CD8-positive, alpha-beta memory T cell (primary cell): ENCODE measurements at regions of chr5 and their contacts with region 1.

Region 1: GRCh38 chr5:170338933-170339779 is 41.6 kb upstream of the LCP2 start:
- DNase-seq: peak; percentile 43 to 81 (median 66)
- H3K4me3 ChIP-seq: no peak overlapping the region
- H3K4me3 Mint-ChIP-seq: peak overlapping the region in 2 of 7 donors; percentile 29 to 48
- H3K27ac ChIP-seq: no peak overlapping the region
- H3K27ac Mint-ChIP-seq: peak overlapping the region; percentile 60 to 94 (median 62)
- H3K4me1 ChIP-seq: peaks cover 47% of the 10 kb centered on the region
- H3K4me1 Mint-ChIP-seq: peaks cover 36 to 40% (median 40%) of the 10 kb centered on the region in 3 donors
- H3K27me3 ChIP-seq: no peaks in the 10 kb centered on the region
- H3K27me3 Mint-ChIP-seq: peaks cover 0 to 5% of the 10 kb centered on the region in 2 donors

Region 2: GRCh38 chr5:170235876-170236864 is 103.0 kb before region 1 on chr5:
- CTCF ChIA-PET with region 1: interaction called, 17 read pairs
- POLR2A ChIA-PET with region 1: no interaction called
- DNase-seq: no peak
- H3K4me3 ChIP-seq: no peak overlapping the region
- H3K4me3 Mint-ChIP-seq: no peak overlapping the region
- H3K27ac ChIP-seq: no peak overlapping the region
- H3K27ac Mint-ChIP-seq: peak overlapping the region in 7 of 8 donors; percentile 2 to 75 (median 44)
- H3K4me1 ChIP-seq: no peaks in the 10 kb centered on the region
- H3K4me1 Mint-ChIP-seq: peaks cover 0 to 9% (median 0%) of the 10 kb centered on the region in 3 donors
- H3K27me3 ChIP-seq: no peaks in the 10 kb centered on the region
- H3K27me3 Mint-ChIP-seq: no peaks in the 10 kb centered on the region

Region 3: DNA sequence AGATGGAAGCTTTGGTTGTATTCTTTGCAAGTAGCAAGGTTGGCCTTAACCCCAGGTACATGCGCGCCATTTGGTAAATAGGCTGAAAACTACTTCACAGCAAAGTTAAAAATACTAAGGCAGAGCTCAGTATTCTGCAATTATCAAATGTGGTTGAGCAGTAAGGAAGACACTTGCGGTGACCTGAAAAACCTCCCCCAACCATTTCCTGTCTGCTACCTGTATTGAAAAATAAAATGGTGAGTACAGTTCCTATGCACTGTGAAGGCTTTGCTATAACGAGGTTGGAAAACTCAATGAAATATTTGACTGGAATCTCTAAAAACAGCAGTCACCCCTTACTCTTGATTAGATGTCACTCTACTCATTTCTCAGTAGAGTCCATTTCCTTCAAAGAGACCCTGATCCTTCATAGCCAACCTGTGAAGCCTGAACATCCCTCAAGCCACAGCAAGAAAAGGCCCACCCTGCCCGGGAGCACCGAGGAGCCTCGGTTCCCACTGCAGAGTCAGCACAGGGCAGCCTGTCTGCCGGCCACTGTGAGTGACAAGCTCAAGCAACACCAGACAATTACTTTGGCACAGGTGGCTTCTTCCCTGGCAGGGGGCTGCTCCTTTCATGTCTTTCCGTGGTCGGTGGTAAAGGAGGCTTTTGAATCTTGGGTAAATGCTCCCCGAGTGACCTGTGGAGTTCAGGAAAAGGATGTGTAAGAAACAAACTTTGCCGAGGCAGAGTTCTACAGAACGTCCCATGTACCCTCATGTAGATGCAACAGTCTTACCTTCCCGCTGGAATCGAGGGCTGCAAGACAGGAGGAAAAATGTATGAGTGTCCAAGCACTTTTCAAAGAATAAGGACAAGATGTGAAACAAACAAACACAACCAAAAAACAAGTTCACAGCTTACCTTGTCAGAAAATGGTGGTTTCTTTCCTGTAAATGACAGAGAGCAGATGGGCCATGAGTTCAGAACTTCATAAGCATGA is 76.8 kb before region 1 on chr5:
- CTCF ChIA-PET with region 1: interaction called, 114 read pairs
- POLR2A ChIA-PET with region 1: interaction called, 15 read pairs
- DNase-seq: peak in 4 of 5 donors; percentile 40 to 88 (median 78)
- H3K4me3 ChIP-seq: no peak overlapping the region
- H3K4me3 Mint-ChIP-seq: peak overlapping the region; percentile 54 to 80 (median 76)
- H3K27ac ChIP-seq: no peak overlapping the region
- H3K27ac Mint-ChIP-seq: peak overlapping the region; percentile 91 to 98 (median 96)
- H3K4me1 ChIP-seq: peaks cover 76% of the 10 kb centered on the region
- H3K4me1 Mint-ChIP-seq: peaks cover 80 to 91% (median 91%) of the 10 kb centered on the region in 3 donors
- H3K27me3 ChIP-seq: no peaks in the 10 kb centered on the region
- H3K27me3 Mint-ChIP-seq: peaks cover 0 to 2% of the 10 kb centered on the region in 2 donors

Region 4: DNA sequence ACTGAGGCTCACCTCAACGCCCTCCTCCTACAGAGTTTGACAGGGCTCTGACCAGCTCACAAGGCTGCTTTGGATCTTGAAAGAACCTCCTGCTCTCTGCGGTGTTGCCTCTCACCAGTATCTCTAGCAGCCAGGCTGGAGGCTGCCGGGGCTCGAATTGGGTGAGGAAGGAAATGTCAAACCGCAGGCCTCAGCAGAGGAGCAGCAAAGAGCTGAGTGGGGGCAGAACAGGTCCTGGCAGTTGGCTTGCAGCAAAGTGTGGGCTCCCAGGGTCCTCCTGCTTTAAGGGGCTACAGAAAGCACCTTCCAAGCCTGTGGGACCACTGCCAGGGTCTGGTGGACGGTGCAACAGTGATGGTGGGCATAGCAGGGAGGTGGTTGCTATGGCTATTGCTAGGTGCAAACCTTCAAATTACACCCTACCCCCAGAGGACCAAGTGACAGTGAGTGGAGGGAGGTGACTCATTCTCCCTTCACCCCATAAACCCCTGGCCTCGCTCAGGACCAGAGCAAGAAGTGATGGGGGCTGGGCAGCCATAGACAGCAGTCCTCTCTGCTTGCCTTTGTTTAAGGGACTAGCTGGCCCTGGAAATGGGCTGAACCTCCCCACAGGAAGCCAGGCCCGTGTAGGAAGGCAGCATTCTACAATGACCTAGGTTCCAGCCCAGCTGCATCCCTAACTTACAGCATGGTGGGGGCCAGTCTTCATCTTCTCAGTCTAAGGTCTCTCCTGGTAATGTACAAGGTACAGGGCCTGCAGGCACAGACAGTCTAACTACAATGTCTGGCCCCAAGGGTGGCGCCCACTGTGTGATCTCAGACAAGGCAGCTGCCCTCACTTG is 60.3 kb before region 1 on chr5:
- CTCF ChIA-PET with region 1: interaction called, 132 read pairs
- POLR2A ChIA-PET with region 1: interaction called, 27 read pairs
- DNase-seq: peak; percentile 74 to 96 (median 93)
- H3K4me3 ChIP-seq: peak overlapping the region; percentile 55
- H3K4me3 Mint-ChIP-seq: peak overlapping the region; percentile 63 to 89 (median 85)
- H3K27ac ChIP-seq: peak overlapping the region; percentile 65
- H3K27ac Mint-ChIP-seq: peak overlapping the region; percentile 93 to 99 (median 97)
- H3K4me1 ChIP-seq: peaks cover 96% of the 10 kb centered on the region
- H3K4me1 Mint-ChIP-seq: peaks cover 94 to 99% (median 99%) of the 10 kb centered on the region in 3 donors
- H3K27me3 ChIP-seq: no peaks in the 10 kb centered on the region
- H3K27me3 Mint-ChIP-seq: peaks cover 0 to 1% of the 10 kb centered on the region in 2 donors

Region 5: GRCh38 chr5:170293273-170293672 is 45.9 kb before region 1 on chr5:
- CTCF ChIA-PET with region 1: interaction called, 93 read pairs
- POLR2A ChIA-PET with region 1: interaction called, 67 read pairs
- DNase-seq: peak in 4 of 5 donors; percentile 49 to 78 (median 70)
- H3K4me3 ChIP-seq: peak overlapping the region; percentile 100
- H3K4me3 Mint-ChIP-seq: peak overlapping the region; percentile 98 to 100 (median 99)
- H3K27ac ChIP-seq: peak overlapping the region; percentile 19
- H3K27ac Mint-ChIP-seq: peak overlapping the region; percentile 93 to 99 (median 96)
- H3K4me1 ChIP-seq: peaks cover 70% of the 10 kb centered on the region
- H3K4me1 Mint-ChIP-seq: peaks cover 66 to 77% (median 72%) of the 10 kb centered on the region in 3 donors
- H3K27me3 ChIP-seq: no peaks in the 10 kb centered on the region
- H3K27me3 Mint-ChIP-seq: no peaks in the 10 kb centered on the region

Region 6: DNA sequence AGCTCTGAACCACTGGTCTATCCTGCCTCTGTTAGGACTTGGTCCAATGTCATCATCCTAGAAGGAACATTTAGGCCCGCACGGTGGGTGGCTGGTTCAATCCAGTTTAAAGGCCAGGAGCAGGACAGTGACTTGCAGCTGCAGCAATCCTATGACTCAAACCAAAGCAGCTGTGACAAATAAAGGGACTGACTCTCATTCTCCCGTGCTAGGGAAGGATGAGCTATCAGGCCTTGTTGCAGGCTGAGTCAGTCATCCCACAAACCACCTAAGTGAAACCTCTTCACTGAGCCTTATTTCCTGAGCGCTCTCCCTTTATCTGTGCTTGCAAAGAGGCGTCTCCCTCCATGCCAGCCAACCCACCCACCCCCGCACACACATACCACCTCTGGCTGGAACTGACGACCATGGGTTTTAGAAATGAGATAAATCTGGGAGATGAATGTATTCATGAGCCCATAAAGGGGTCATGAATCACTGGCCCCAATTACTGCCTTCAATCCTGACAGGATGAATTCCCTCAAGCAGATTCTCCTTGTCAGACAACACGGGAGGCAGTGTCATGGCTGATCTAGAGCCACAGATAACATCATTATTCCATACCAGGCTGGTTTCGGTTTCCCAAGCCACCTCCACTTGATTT is 258.1 kb after region 1 on chr5:
- CTCF ChIA-PET with region 1: no interaction called
- POLR2A ChIA-PET with region 1: no interaction called
- DNase-seq: no peak
- H3K4me3 ChIP-seq: no peak overlapping the region
- H3K4me3 Mint-ChIP-seq: no peak overlapping the region
- H3K27ac ChIP-seq: no peak overlapping the region
- H3K27ac Mint-ChIP-seq: no peak overlapping the region
- H3K4me1 ChIP-seq: no peaks in the 10 kb centered on the region
- H3K4me1 Mint-ChIP-seq: no peaks in the 10 kb centered on the region
- H3K27me3 ChIP-seq: no peaks in the 10 kb centered on the region
- H3K27me3 Mint-ChIP-seq: peaks cover 11 to 33% of the 10 kb centered on the region in 2 donors